Right ventricle myocardium inferior (tissue), 1 donor: ENCODE measurements at regions of chr10 and their contacts with region 1.

Region 1: DNA sequence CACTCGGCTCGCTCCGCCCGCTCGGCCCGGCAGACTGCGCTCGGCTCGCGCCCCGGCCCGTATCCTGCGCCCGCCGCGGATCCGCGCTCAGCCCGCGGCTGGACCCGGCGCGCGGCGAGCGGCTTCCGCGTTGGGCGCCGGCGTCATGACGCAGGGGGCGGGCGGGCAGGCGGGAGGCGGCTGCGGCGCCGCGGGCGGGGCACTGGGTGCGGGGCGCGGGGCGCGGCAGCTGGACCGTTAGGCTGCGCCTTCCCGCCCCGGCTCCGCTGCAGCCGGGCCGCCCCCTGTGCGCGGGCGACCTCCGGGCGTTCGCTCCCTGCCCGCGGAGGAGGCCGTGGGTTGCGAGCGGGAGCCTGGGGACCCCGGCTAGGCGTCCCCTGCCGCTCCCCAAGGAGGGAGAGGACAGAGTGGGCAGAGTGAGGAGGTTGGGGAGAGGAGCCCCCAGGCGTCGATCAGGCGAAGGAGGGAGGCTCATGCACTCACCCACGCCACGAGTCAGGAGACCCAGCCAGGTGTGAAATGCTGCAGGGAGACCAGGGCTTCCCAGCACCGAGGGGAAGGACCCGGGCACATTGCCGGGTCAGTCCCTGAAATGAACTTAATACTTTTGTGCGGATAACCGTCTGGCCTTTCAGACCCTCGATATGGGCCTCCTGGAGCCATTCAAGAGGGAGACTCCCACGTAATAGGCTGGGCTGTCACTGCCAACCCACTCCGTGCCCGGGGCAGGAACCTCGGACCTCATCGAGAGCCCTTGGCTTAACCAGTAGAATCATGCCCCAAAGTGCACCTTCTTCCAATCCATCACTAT is at the start of gene PIP4K2A:
- DNase-seq: peak; percentile 93
- ATAC-seq: peak; percentile 91
- total RNA-seq, gene PIP4K2A: 14.0 TPM

Region 2: DNA sequence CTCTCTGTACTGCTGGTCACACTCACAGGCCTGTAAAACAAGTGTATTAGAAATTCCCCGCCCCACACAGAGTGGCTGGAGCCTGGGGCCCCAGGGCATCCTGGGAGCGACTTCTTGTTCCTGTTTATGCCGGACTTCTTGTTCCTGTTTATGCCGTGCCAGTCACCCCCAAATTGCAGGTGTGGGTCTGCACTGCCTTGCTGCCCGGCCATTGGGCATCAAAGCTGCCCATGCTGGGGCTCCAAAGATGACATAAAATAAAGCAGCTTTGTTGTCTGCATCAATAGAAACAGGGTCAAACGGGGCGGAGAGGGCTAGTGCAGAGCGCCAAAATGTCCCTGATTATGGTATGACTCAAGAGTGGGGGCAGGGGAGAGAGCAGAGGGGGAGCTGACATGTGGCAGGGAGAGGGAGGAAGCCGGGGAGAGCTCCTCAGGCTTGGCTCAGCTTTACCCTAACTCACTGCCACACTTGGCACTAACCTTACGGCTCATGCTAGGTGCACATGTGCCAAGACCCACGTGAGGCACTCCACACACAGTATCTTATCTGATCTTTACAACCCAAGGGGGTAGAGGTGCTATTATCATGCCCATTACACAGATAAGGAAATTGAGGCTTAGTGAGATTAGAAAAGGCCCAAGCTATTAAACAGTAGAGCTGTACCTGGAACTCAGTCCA is 98.7 kb before region 1 on chr10:
- intact Hi-C with region 1: no loop called
- DNase-seq: peak; percentile 72
- ATAC-seq: peak; percentile 29

Region 3: GRCh38 chr10:22704471-22704911 is 10.2 kb before region 1 on chr10:
- intact Hi-C with region 1: no loop called
- DNase-seq: peak; percentile 39
- ATAC-seq: peak; percentile 44

Region 4: DNA sequence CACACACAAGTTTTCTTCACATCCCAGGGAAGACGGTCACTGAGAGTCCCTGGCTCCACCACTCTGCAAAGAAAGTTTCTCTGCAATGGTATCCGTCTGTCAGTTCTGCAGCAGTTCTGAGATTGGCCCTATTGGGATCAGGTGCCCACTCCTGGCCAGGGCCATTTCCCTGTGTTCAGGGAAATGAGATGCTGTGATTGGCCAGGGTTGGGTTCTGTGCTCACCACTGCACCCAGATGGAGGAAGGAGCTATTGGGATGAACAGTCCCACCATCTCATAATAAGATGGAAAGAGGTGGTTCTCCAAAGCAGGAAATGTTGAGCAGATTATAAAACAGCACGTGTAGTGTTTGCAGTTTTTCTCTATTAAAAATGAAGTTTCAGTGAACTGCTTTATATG is 13.0 kb after region 1 on chr10:
- intact Hi-C with region 1: no loop called
- DNase-seq: no peak
- ATAC-seq: no peak

Region 5: DNA sequence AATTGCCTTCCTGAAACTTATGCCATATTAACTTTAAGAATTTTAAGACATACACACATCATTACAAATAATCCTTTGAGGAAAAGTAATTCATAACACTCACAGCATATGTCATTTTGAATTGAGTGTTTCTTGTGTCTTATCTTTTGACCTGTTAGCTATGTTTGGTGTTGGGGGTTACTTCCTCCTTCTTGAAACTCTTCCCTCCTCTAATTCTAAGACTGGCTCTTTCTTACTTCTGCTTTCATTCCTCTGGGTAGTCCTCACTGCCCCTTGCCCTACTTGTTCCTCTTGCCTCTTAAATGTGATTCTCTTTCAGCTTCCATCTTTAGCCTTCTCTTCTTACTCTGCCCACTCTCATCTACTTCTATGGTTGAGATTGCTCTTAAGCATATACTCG is 28.0 kb after region 1 on chr10:
- intact Hi-C with region 1: loop called (anchors 1 kb)
- DNase-seq: no peak
- ATAC-seq: peak; percentile 31

Region 6: DNA sequence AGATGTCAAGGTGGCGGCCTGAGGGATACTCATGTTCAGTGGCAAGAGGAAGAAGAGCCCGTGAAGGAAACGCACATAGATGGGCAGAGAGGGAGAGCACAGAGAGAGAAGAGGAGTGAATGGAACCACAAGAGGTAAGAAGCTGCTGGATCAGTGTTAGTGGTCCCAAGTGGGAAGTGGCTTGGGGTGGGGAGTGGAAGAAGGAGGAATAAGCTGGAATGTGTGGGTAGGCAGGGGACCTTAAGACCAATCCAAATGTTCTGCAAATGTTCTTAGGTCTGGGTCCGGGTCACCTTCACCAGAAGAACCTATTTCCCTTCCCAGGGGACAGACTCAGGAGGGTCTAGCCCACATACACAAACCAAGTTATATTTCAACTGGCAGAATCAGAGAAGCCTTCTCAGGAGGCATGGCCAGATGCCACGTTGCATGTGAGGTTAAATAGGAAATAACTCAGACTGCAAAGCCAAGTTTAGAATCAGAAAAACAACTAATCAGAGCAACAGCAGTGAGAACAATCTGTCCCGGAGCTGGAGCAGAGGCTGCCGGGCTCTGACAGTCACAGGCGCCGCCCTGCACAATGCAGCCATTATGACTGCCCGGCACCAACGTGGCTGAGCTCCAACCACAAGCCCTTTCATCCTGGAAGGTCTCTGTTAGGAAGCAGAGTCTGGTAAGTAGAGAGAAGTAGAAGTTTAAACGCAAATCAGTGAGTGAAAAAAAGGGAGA is 134.6 kb after region 1 on chr10:
- intact Hi-C with region 1: loop called (anchors 10 kb)
- DNase-seq: peak; percentile 91
- ATAC-seq: peak; percentile 98

Region 7: DNA sequence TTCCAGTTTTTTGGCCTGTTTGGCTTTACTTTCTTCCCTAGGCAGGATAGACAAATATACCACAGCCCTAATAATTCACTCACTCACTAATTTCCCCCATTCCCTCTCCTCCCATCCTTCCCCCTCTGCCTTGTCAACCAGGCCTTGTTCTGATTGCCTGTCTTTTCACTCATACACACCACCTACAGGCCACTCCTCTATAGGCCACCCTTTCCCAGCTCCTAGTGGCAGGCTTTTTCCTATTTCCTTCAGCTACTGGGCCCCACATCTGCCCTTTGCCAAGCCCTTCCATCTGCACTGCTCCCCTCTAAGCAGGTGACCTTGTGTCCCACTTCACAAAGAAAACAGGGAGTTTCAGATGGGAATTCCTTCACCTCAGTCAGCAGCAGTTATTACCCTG is 320.9 kb after region 1 on chr10:
- intact Hi-C with region 1: no loop called
- DNase-seq: no peak
- ATAC-seq: no peak